Activated CD4-positive, alpha-beta memory T cell treated with anti-CD3 and anti-CD28 coated beads, Interleukin-2, amount 10 ng/mL, durations not matched to agents 7 days and 5 days (primary cell): ENCODE measurements at regions of chr1 and their contacts with region 1.

Region 1: DNA sequence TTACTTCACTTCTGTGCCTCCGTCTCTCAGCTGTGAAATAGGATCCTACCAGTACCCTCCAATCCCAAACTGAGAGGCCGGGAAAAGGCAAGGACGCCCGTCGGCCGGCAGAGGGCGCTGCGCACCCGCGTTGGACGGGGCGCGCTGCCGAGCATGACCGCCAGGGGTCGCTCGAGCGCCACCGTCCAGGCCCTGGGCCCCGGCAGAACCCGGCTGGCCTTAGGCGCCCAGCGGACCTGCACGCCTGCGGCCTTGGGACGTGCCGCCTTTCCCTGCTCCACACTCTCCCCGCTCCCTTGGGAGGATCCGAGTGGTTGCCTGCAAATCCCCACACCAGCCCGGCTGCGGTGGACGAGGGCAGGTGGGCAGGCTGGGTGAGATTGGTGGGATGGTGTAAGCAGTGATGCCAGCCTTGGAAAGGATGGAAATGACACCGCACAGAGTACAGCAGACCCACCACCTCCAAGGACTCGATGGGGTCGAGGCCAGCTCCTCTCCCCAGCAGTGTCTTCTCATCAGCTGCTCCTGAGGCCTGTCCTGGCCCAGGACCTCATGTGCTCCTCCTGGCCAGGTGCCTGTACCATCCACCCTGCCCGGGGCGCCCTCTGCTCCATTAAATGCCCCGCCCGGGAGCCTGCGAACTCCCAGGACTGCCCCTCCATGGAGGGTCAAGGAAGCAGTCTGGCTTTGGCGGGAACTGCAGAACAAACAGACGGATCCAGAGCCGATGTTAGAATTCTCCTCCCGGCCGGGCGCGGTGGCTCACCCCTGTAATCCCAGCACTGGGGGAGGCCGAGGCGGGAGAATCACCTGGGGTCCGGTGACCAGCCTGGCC is 47.4 kb upstream of the LBR start:
- DNase-seq: peak; percentile 77
- H3K4me3 Mint-ChIP-seq: no peak overlapping the region
- H3K27ac Mint-ChIP-seq: no peak overlapping the region
- H3K4me1 Mint-ChIP-seq: peaks cover 45% of the 10 kb centered on the region
- H3K27me3 Mint-ChIP-seq: peaks cover 2% of the 10 kb centered on the region

Region 2: GRCh38 chr1:225460737-225461562 is 14.3 kb before region 1 on chr1:
- CTCF ChIA-PET with region 1: interaction called, 11 read pairs
- POLR2A ChIA-PET with region 1: interaction called, 6 read pairs
- DNase-seq: peak; percentile 69
- H3K4me3 Mint-ChIP-seq: no peak overlapping the region
- H3K27ac Mint-ChIP-seq: peak overlapping the region; percentile 77
- H3K4me1 Mint-ChIP-seq: peaks cover 70% of the 10 kb centered on the region
- H3K27me3 Mint-ChIP-seq: no peaks in the 10 kb centered on the region